HEK293 (cell line): ENCODE measurements at regions of chr6 and their contacts with region 1.

Region 1: GRCh38 chr6:20126789-20127653 is 85.2 kb downstream of the MBOAT1 start:
- H3K4me3 ChIP-seq: no peak overlapping the region
- H3K27ac ChIP-seq: peak overlapping the region; percentile 49
- H3K4me1 ChIP-seq: peaks cover 7% of the 10 kb centered on the region
- CTCF ChIP-seq: peak; percentile 81

Region 2: DNA sequence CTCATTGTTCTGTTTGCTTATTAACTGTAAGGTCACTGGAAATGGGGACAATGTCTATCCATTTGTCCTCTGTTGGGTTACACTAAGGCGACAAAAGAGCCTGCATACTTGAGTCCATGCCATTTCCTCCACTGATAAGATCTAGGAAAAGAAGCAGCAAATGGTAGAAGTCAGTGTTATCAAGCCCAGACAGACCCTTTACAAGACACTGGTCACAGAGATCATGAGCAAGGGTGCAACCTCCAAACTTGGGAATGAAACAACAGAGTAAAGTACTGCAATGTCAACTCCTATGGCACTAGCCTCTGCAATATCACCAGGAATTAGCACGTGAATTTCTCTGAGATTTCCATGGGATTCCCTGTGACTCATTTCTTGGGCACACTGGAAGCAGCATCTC is 162.9 kb before region 1 on chr6:
- CTCF ChIA-PET with region 1: no interaction called
- POLR2A ChIA-PET with region 1: no interaction called
- H3K4me3 ChIP-seq: no peak overlapping the region
- H3K27ac ChIP-seq: no peak overlapping the region
- H3K4me1 ChIP-seq: no peaks in the 10 kb centered on the region
- CTCF ChIP-seq: no peak

Region 3: DNA sequence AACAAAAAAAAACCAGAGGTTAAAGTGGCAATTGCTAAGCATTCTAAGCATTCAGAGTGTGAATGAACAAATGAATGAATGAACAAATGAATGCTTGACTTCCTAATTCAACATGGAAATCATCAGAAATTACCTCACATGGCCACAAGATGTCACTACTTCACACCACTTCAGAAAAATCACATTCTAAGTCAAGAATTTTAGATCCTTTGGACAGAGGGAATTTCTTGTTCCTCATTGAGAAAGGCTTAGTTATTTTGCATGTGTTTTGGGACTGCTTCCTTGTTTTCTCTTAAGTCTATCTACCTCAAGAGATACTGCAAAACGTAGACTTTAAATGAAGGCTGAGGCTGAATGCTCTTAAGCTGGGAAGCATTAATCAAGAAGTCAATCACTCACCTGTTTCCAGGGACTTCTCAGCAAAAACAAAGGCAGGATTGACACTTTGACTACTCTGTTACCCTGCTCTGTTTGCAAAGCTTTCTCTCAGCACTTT is 34.9 kb before region 1 on chr6:
- CTCF ChIA-PET with region 1: interaction called, 153 read pairs
- POLR2A ChIA-PET with region 1: no interaction called
- H3K4me3 ChIP-seq: no peak overlapping the region
- H3K27ac ChIP-seq: no peak overlapping the region
- H3K4me1 ChIP-seq: no peaks in the 10 kb centered on the region
- CTCF ChIP-seq: no peak; the same call in 1 of the 2 replicates

Region 4: GRCh38 chr6:20109526-20109925 is 17.5 kb before region 1 on chr6:
- CTCF ChIA-PET with region 1: interaction called, 75 read pairs
- POLR2A ChIA-PET with region 1: no interaction called
- H3K4me3 ChIP-seq: no peak overlapping the region
- H3K27ac ChIP-seq: no peak overlapping the region
- H3K4me1 ChIP-seq: no peaks in the 10 kb centered on the region
- CTCF ChIP-seq: no peak

Region 5: DNA sequence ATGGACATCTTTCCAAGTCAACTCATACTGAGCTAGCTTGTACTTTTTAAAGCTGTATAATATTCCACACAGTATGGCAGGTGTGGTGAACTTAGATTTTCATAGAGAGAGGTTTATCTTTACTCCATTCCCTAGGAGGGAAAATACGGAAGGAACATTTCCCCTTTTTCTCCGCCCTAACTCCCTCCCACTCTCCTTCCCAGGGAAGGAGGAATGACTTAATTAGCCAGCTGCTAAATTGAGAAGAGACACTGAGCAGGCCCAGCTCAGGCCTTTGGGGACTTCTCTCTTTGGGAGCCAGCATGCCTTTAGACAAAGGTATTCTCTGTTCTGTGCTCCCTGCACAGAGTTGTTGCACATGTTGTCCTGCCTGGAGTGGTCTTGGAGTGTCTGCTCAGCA is 39.2 kb after region 1 on chr6:
- CTCF ChIA-PET with region 1: interaction called, 13 read pairs
- POLR2A ChIA-PET with region 1: no interaction called
- H3K4me3 ChIP-seq: no peak overlapping the region
- H3K27ac ChIP-seq: no peak overlapping the region
- H3K4me1 ChIP-seq: no peaks in the 10 kb centered on the region
- CTCF ChIP-seq: no peak